Vagina (tissue), 2 donors: ENCODE measurements at regions of chr19 and their contacts with region 1.

Region 1: GRCh38 chr19:47075179-47075810 is 26.9 kb upstream of the TMEM160 start:
- DNase-seq: no peak
- H3K4me3 ChIP-seq: no peak overlapping the region
- H3K27ac ChIP-seq: no peak overlapping the region
- H3K4me1 ChIP-seq: peaks cover 6% of the 10 kb centered on the region
- H3K27me3 ChIP-seq: no peaks in the 10 kb centered on the region
- CTCF ChIP-seq: no peak
- POLR2A ChIP-seq: no peak

Region 2: DNA sequence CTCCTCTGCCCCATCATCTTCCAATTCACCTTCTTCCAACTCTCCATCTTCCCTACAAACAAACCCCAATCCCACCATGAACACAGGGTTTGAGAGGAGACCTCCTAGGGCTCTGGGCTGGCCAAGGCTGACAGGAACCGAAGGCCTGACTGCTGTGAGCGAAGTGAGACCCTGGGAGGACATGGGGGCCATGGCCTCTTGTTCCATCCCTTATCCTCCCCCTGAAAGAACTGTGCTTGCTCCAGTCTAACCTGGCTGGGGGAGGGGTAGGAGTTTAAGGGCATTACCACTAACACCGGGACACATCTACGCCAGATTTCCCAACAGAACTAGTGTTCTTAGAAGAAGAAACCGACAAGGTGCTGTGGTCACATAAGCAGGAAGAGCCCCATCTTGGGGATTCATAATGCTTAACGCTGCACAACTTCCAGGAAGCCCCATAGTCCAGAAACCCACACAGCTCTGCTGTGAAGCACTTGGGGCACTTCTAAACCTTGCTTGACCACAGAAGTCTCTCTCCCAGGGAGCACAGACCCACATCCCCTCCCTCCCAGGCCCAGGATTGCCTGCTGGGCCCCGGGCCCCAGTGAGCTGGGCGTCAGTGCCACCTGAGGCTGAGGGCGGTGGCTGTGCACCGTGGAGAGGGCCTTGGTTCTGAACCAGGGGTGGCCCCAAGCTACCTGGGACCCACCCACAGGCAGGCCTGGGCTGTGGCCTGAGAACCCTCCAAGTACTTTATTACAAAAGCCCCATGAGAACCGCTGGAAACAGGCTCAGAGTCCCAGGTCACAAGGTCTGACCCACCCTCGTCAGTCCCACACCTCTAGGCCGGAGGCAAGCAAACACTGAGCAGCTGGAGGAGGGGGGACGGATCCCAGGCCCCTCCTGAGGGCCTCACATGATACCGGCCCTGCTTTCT is 19.5 kb after region 1 on chr19:
- intact Hi-C with region 1: no loop called
- DNase-seq: no peak
- H3K4me3 ChIP-seq: no peak overlapping the region
- H3K27ac ChIP-seq: peak overlapping the region; percentile 83
- H3K4me1 ChIP-seq: peaks cover 58% of the 10 kb centered on the region
- H3K27me3 ChIP-seq: no peaks in the 10 kb centered on the region
- CTCF ChIP-seq: no peak
- POLR2A ChIP-seq: no peak

Region 3: GRCh38 chr19:47129579-47129978 is 54.3 kb after region 1 on chr19:
- intact Hi-C with region 1: loop called (anchors 2 kb)
- DNase-seq: no peak
- H3K4me3 ChIP-seq: no peak overlapping the region
- H3K27ac ChIP-seq: no peak overlapping the region
- H3K4me1 ChIP-seq: peaks cover 34% of the 10 kb centered on the region
- H3K27me3 ChIP-seq: no peaks in the 10 kb centered on the region
- CTCF ChIP-seq: no peak
- POLR2A ChIP-seq: no peak